Esophagus muscularis mucosa (tissue), 4 donors: ENCODE measurements at regions of chr1 and their contacts with region 1.

Region 1: DNA sequence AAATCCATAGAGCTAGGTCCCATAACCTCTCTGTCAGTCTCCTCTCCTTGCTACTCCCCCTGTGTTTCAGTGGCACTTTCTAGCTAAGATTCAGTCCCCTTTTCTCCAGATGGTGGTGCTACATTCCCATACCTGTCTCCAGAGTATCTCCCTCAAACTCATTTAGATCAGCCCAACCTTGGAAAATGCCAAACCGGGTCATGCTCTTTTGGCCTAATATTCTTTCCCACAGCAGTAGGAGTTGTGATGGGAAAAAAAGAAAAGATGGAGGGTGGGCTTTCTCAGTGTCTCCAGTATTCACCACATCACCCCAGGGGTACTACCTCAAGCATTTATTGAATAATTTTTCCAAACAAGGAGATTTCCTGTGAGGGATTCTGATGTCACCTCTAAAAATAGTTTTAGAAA is 3.2 kb upstream of the RXFP4 start:
- DNase-seq: no peak
- H3K4me3 ChIP-seq: no peak overlapping the region
- H3K27ac ChIP-seq: peak overlapping the region; percentile 8 to 71 (median 42)
- H3K4me1 ChIP-seq: peaks cover 61 to 68% (median 65%) of the 10 kb centered on the region in 4 donors
- H3K27me3 ChIP-seq: no peaks in the 10 kb centered on the region
- CTCF ChIP-seq: peak; percentile 67 to 81 (median 67)
- EP300 ChIP-seq: no peak
- POLR2A ChIP-seq: no peak

Region 2: GRCh38 chr1:155989242-155990004 is 51.2 kb after region 1 on chr1:
- intact Hi-C with region 1: loop called (anchors 1 kb)
- DNase-seq: peak; percentile 96
- H3K4me3 ChIP-seq: peak overlapping the region; percentile 49 to 59 (median 50)
- H3K27ac ChIP-seq: peak overlapping the region; percentile 68 to 77 (median 72)
- H3K4me1 ChIP-seq: peaks cover 7 to 29% (median 19%) of the 10 kb centered on the region in 4 donors
- H3K27me3 ChIP-seq: no peaks in the 10 kb centered on the region
- CTCF ChIP-seq: peak; percentile 98 to 99 (median 99)
- EP300 ChIP-seq: no peak
- POLR2A ChIP-seq: no peak